MCF 10A (cell line): ENCODE measurements at regions of chr5 and their contacts with region 1.

Region 1: DNA sequence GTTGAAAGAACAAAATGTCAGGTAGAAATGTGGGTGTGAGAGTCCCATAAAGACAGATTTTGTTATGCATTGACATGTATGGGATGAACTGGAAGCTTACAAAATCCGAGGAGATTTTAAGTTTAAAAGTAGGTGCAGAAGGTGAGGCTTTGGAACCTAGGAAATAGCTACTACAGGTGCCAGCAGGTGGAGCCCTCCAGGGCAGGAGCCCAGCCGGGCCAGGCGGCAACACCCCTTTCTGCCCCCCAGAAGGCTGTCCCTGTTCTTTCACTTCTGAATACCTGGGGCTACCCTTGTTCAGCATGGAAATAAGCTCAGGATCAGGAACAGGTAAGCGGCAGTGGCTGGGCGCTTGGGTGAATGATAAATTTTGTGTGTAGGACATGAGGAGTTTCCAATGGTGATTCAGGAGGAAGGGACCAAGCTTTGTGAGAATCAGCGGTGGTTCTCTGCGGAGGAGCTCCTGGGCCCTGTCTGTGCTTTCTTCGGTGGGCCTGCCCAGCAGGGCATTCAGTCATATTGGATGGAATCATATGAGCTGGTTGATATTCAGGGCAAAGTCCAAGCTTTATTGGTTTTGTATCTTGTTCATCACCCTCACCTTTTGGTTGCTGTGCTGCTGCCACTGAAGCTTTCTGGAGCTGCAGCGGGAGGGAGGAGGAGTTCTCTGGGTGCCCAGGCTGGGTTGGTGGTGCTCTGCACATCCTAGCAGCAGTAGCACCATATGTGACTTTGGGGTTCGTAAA is 12.3 kb downstream of the PCBD2 start:
- DNase-seq: no peak
- H3K4me3 Mint-ChIP-seq: no peak overlapping the region
- H3K27ac Mint-ChIP-seq: no peak overlapping the region
- H3K4me1 Mint-ChIP-seq: no peaks in the 10 kb centered on the region
- H3K27me3 Mint-ChIP-seq: no peaks in the 10 kb centered on the region
- CTCF ChIP-seq: peak; percentile 33

Region 2: GRCh38 chr5:134935711-134936602 is 18.7 kb after region 1 on chr5:
- CTCF ChIA-PET with region 1: interaction called, 21 read pairs
- POLR2A ChIA-PET with region 1: no interaction called
- intact Hi-C with region 1: no loop called
- DNase-seq: no peak
- H3K4me3 Mint-ChIP-seq: no peak overlapping the region
- H3K27ac Mint-ChIP-seq: no peak overlapping the region
- H3K4me1 Mint-ChIP-seq: no peaks in the 10 kb centered on the region
- H3K27me3 Mint-ChIP-seq: no peaks in the 10 kb centered on the region
- CTCF ChIP-seq: no peak